ENCODE measurements at regions of chr9 and their contacts with region 1.

Region 1: DNA sequence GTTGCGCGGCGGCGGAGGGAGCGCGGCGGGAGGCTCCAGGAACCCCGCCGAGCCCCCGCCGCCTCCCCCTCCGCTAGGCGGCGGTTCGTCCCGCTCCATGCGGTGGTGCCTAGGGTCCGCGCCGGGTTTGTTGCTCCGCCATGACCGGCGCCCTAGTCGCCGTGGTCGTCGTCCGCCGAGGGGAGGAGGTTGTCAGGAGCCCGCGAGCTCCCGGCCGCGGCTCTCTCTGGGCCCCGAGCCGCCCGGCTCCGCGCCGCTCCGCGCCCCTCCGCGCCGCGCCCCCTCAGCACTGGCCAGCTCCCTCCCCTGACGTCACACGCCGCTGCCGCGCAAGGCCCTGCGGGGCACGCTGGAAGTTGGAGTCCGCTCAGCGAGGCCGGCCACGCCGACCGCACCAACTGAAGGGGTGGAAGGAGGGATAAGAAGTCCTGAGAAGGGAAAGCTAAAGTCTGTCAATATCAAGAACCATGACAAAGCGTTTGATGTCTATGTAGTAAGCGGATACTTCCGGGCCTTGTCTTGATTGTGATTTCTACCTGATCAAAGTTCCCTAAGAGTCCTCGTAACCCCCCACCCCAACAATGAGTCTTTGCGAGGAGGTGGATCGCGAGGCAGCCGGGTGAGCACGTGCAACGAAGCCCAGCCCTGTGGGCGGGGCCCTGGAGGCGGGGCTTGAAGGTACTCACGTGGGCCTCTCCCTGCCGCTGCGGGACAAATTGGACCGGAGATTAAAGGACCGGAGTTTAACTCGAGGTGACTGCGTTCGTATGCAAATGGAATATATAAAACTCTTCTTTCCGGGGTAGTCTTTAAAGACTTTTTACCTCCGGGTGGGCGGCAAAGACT is at the start of gene NR6A1:
- DNase-seq: peak; percentile 86 to 97 (median 92)
- ATAC-seq: peak; percentile 90
- H3K4me3 ChIP-seq: peak within 1 kb of the TSS; percentile 59 to 67
- H3K4me3 Mint-ChIP-seq: peak within 1 kb of the TSS; percentile 89
- H3K27ac ChIP-seq: peak within 1 kb of the TSS in 1 of 2 experiments; percentile 58
- H3K27ac Mint-ChIP-seq: peak within 1 kb of the TSS; percentile 82
- H3K4me1 ChIP-seq: peaks cover 21% of the 10 kb centered on the region
- H3K4me1 Mint-ChIP-seq: peaks cover 39% of the 10 kb centered on the region
- H3K27me3 ChIP-seq: peaks cover 24 to 43% of the 10 kb centered on the region in 2 experiments
- H3K27me3 Mint-ChIP-seq: peaks cover 73% of the 10 kb centered on the region
- CTCF ChIP-seq: no peak
- total RNA-seq, gene NR6A1: not detected

Region 2: DNA sequence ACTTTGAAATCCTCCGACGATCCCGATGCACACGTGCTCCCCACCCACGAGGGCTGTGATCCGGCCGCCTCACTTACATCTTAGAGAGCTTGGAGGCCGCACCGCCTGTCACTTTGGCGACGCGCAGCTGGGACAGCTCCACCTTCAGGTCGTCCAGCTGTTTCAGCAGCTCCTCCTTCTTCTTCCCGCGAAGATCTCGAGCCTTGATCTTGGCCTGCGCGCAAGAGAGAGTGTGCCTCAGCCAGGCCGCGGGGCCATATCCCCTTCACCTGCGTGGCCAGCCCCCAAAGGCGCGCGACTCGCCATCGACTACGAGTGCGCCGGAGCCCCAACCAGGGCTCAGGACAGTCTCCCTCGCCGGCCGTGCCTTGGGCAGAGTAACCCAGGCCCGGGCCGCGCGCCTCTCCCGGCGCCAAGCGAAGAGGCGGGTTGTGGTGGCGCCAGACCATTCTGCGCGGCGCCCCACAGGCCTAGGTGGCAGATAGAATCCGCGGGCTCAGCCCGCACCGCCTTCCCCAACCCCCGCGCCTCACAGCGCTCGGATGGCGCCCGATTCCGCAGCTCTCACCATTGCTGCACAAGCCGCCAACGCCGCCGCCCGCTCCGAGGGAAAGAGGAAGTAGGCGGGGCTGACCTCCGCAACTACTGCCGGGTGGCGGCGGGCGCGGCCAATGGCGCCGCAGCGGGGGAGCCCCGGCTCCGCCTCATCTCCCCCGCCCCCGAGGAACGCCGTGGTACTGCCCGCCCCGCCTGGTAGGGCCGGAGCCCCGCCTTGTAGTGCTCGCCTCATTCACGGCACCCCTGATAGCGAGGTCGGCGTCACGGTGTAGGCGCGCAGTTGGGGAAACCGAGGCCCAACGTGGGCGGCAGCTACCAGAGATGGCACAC is 90.3 kb after region 1 on chr9 and contains the starts of genes ARPC5L and RPL35:
- CTCF ChIA-PET with region 1: interaction called, 245 read pairs
- POLR2A ChIA-PET with region 1: interaction called, 4 read pairs
- intact Hi-C with region 1: loop called in 1 of 2 experiments (anchors 1 kb)
- DNase-seq: peak; percentile 90 to 97 (median 95)
- ATAC-seq: peak; percentile 95
- H3K4me3 ChIP-seq: peak within 1 kb of the TSS; percentile 67 to 90
- H3K4me3 Mint-ChIP-seq: peak within 1 kb of the TSS; percentile 97
- H3K27ac ChIP-seq: peak within 1 kb of the TSS; percentile 88 to 93
- H3K27ac Mint-ChIP-seq: peak within 1 kb of the TSS; percentile 98
- H3K4me1 ChIP-seq: peaks cover 16% of the 10 kb centered on the region
- H3K4me1 Mint-ChIP-seq: peaks cover 31% of the 10 kb centered on the region
- H3K27me3 ChIP-seq: no peaks in the 10 kb centered on the region
- H3K27me3 Mint-ChIP-seq: no peaks in the 10 kb centered on the region
- CTCF ChIP-seq: no peak
- total RNA-seq, gene ARPC5L: 43.2 to 45.5 TPM
- total RNA-seq, gene RPL35: 1,798 to 1,805 TPM

Region 3: GRCh38 chr9:124894741-124895170 is 123.5 kb after region 1 on chr9:
- CTCF ChIA-PET with region 1: interaction called, 11 read pairs
- POLR2A ChIA-PET with region 1: no interaction called
- intact Hi-C with region 1: loop called (anchors 1 kb)
- DNase-seq: peak in 8 of 9 experiments; percentile 21 to 83 (median 53)
- ATAC-seq: peak; percentile 97
- H3K4me3 ChIP-seq: no peak overlapping the region
- H3K4me3 Mint-ChIP-seq: no peak overlapping the region
- H3K27ac ChIP-seq: no peak overlapping the region
- H3K27ac Mint-ChIP-seq: peak overlapping the region; percentile 81
- H3K4me1 ChIP-seq: no peaks in the 10 kb centered on the region
- H3K4me1 Mint-ChIP-seq: peaks cover 13% of the 10 kb centered on the region
- H3K27me3 ChIP-seq: peaks cover 0 to 7% of the 10 kb centered on the region in 2 experiments
- H3K27me3 Mint-ChIP-seq: peaks cover 13% of the 10 kb centered on the region
- CTCF ChIP-seq: peak; percentile 63

Region 4: DNA sequence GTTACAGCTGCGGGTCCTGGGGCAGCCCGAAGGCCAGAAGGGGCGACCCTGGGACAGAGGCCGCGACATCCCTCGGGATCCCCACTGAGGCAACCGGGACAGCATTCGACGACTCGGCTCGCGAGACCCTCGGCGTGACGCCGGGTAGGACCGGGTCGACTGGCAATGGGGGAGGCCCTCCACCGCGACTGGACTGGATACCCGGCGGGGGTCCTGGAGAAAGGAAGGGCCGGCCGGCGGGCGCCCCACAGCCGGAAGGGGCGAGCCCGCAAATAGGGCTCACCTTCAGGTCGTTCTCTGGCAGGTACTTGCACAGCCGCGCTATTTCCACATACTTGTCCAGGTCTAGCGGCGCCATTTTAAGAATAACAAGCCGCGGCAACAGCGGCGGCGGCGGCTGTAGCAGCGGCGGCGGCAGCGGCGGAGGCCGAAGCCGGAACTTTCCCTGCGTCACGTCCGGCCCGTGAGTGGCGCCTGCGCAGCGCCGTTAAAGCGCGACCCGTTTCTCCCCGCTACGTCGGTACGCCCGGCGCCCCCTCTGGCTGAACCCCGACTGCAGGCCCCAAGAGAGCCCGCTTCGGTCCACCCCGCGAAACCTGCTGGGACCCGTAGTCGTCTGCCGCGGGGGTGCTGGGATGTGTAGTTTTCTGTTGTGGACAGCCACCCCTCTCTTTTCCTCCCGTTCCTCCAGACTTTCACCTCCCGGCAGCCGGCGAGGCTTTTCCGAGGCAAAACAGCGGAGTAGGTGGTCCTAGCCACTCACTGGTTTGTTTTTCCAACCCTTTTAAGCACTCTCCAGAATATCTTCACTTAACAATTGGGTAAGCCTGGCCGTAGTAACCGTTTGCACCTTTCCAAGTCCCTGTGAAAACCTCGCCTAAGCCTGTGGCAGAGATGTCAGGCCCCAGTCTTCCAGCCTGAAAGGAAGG is 418.4 kb after region 1 on chr9 and contains the start of gene PPP6C:
- CTCF ChIA-PET with region 1: no interaction called
- POLR2A ChIA-PET with region 1: no interaction called
- intact Hi-C with region 1: loop called in 1 of 2 experiments (anchors 10 kb)
- DNase-seq: peak; percentile 94 to 99 (median 97)
- ATAC-seq: peak; percentile 95
- H3K4me3 ChIP-seq: peak within 1 kb of the TSS; percentile 98
- H3K4me3 Mint-ChIP-seq: peak within 1 kb of the TSS; percentile 97
- H3K27ac ChIP-seq: peak within 1 kb of the TSS; percentile 97 to 98
- H3K27ac Mint-ChIP-seq: peak within 1 kb of the TSS; percentile 93
- H3K4me1 ChIP-seq: peaks cover 56% of the 10 kb centered on the region
- H3K4me1 Mint-ChIP-seq: peaks cover 71% of the 10 kb centered on the region
- H3K27me3 ChIP-seq: no peaks in the 10 kb centered on the region
- H3K27me3 Mint-ChIP-seq: no peaks in the 10 kb centered on the region
- CTCF ChIP-seq: peak; percentile 63
- total RNA-seq, gene PPP6C: 37.8 to 38.3 TPM

Region 5: GRCh38 chr9:125374443-125375309 is 603.4 kb after region 1 on chr9:
- CTCF ChIA-PET with region 1: interaction called, 5 read pairs
- POLR2A ChIA-PET with region 1: no interaction called
- intact Hi-C with region 1: loop called in 1 of 2 experiments (anchors 1 kb)
- DNase-seq: peak; percentile 25 to 77 (median 58)
- ATAC-seq: peak; percentile 96
- H3K4me3 ChIP-seq: no peak overlapping the region
- H3K4me3 Mint-ChIP-seq: peak overlapping the region; percentile 64
- H3K27ac ChIP-seq: no peak overlapping the region
- H3K27ac Mint-ChIP-seq: no peak overlapping the region
- H3K4me1 ChIP-seq: peaks cover 11% of the 10 kb centered on the region
- H3K4me1 Mint-ChIP-seq: peaks cover 10% of the 10 kb centered on the region
- H3K27me3 ChIP-seq: no peaks in the 10 kb centered on the region
- H3K27me3 Mint-ChIP-seq: peaks cover 10% of the 10 kb centered on the region
- CTCF ChIP-seq: peak; percentile 76

Measured in CD8-positive, alpha-beta T cell (primary cell).